ENCODE measurements at regions of chr20 and their contacts with region 1.

Region 1: DNA sequence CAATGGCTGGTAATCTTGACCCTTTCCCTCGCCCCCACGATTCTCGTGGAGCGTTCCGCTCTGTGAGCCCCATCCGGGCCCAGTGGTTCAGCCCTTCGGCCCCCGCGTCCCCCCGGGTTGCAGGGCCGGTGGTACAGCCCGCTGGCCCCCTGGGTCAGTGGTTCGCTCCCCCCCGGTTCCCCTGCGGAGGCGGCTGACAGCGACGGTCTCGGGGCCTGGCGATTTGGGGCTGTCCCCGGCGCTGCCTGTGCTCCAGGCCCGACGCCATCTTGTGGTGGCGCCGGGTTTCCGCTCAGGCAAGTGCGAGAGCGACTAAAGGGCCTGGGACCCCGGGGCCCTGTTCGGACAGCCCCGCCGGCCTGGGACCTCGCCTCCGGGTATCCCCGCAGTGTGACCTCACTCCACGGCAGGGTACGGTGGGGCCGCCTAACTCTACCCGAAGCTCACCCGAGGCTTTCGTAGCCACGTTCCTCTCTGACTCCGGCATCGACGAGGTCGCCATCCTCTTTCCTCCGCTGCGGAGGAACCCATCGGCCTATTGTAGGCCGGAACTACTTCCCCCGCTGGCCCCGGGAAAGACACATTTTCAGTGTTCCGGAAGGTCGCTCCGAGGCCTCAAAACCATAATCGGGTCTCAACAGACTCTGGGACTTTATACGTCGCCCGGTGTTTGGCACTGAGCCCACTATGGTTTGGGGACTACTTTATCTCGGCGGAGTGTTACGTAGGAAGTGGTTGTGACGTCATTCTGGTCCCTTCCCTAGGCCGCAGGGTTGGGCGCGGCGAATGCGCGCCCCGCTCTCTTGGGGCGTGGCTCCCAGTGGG is at the start of gene ZNF335:
- DNase-seq: peak; percentile 82
- H3K4me3 ChIP-seq: peak within 1 kb of the TSS; percentile 97
- CTCF ChIP-seq: peak; percentile 38

Region 2: GRCh38 chr20:45798935-45799642 is 172.8 kb before region 1 on chr20:
- CTCF ChIA-PET with region 1: interaction called, 63 read pairs
- POLR2A ChIA-PET with region 1: no interaction called
- DNase-seq: no peak
- H3K4me3 ChIP-seq: no peak overlapping the region
- CTCF ChIP-seq: peak; percentile 75

Region 3: GRCh38 chr20:45833030-45833882 is 138.6 kb before region 1 on chr20 and contains the start of gene SNX21:
- CTCF ChIA-PET with region 1: interaction called, 10 read pairs
- POLR2A ChIA-PET with region 1: interaction called, 3 read pairs
- DNase-seq: peak; percentile 63
- H3K4me3 ChIP-seq: peak within 1 kb of the TSS; percentile 81
- CTCF ChIP-seq: no peak

Region 4: DNA sequence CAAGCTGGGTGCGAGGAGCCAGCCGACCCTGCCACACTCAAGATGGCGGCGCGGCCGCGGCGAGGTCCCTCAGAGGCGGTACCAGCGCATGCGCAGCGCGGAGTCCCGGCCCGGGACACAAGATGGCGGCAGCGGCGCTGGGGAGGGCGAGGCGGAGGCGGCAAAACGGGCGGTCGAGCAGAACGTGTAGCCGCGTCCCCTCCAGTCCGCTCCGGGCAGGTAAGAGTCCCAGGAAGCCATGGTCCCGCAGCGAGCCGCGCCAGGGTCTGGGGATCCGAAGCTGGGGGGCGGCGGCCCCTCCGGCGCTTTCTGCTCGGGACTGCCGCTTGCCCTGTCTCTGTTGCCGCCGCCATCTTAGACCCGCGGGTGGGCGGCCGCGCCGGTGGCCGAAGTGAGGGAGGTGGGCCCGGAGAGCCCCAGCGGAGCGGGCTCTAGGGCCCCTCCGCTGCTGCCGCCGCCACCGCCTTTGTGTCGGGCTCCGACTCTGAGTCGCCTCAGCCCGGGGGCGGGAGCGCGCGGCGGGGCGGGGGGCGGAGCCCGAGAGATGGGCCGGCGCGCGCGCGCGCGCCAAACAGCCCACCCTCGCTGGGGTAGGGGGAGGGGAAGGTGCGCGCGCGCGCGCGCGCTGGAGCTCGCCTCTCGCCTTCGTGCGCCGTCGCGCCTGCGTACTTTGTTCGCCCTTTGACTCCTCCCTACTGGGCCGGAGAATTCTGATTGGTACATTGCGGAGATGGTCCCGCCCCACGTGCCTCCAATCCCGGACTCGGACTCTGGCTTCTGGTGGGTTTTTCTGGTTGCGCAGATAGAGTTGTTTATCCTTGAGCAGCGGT is 37.1 kb before region 1 on chr20 and contains the start of gene PCIF1:
- CTCF ChIA-PET with region 1: interaction called, 55 read pairs
- POLR2A ChIA-PET with region 1: interaction called, 5 read pairs
- DNase-seq: peak; percentile 67
- H3K4me3 ChIP-seq: peak within 1 kb of the TSS; percentile 99
- CTCF ChIP-seq: no peak

Region 5: GRCh38 chr20:46013826-46014516 is 42.1 kb after region 1 on chr20:
- CTCF ChIA-PET with region 1: interaction called, 23 read pairs
- POLR2A ChIA-PET with region 1: no interaction called
- DNase-seq: no peak
- H3K4me3 ChIP-seq: no peak overlapping the region
- CTCF ChIP-seq: peak; percentile 44

Region 6: DNA sequence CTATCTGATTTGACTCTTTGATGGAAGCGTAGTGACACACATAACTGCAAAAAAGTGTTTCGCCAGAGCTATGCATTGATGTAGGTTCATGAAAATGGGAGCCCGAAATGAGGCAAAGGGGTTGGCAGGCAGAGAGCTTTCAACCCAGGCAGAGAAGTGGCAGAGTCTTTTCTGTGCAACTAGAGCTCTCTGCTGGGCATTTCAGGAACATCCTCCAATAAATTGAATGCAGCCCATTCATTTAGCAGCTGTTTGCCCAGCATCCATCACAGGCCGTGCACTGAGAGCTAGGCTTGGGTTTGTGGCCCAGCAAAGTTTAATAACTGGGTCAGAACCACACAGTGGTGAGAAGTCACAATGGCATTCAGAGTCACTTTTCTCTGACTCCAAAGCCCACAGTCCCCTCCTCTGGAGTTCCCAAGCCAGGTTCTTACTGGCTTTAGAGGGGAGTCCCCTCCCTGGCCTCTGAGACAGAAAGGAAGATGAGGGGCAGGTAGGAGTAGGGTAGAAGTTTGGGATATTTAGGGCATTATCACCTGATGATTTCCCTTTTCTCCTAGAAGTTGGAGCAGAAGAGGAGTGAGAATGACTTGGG is 466.4 kb after region 1 on chr20:
- CTCF ChIA-PET with region 1: interaction called, 11 read pairs
- POLR2A ChIA-PET with region 1: no interaction called
- DNase-seq: no peak
- H3K4me3 ChIP-seq: no peak overlapping the region
- CTCF ChIP-seq: peak; percentile 42

Measured in AG04449 (cell line).